A549 (cell line): ENCODE measurements at regions of chr12 and their contacts with region 1.

Region 1: GRCh38 chr12:54337280-54337842 is 12.4 kb downstream of the COPZ1 start:
- DNase-seq: no peak
- ATAC-seq: no peak
- H3K4me3 ChIP-seq: no peak overlapping the region
- H3K27ac ChIP-seq: no peak overlapping the region
- H3K4me1 ChIP-seq: 0 out of 3 replicates have a peak, but pooled peaks cover 2% of the 10 kb centered on the region
- CTCF ChIP-seq: no peak
- EP300 ChIP-seq: no peak
- POLR2A ChIP-seq: no peak
- RAD21 ChIP-seq: no peak

Region 2: GRCh38 chr12:54294152-54294952 is 43.0 kb before region 1 on chr12:
- CTCF ChIA-PET with region 1: interaction called, 23 read pairs
- POLR2A ChIA-PET with region 1: no interaction called
- DNase-seq: peak; percentile 68 to 83
- ATAC-seq: peak; percentile 31 to 51; a peak in 4 of 6 replicates
- H3K4me3 ChIP-seq: no peak overlapping the region
- H3K27ac ChIP-seq: no peak overlapping the region
- H3K4me1 ChIP-seq: no peaks in the 10 kb centered on the region
- CTCF ChIP-seq: peak; percentile 67
- EP300 ChIP-seq: no peak
- POLR2A ChIP-seq: no peak
- RAD21 ChIP-seq: peak; percentile 64 to 82

Region 3: DNA sequence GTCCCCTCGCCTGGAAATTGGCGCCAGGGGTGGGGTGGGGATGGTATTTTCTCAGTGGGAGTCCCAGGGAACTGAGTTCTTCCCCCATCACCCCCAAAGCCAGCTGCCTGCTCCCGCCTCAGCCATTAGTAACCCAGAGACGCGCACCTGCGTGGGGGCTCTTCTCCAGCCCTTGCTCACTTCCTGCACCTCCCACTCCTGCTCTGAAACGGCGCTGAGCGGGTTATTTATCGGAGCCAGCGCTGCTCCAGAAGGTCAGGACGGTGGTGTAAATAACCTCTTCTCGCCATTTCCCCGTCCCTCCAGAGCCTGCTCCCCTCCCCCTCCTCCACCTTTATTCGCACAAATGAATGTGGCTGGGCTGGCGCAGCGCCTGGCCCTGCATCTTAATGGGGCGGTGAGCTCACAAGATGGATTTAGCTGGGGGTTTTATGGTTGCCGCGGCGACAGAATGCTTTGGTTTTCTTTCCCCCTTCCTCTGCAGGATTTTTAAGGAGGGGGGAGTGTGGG is 14.7 kb after region 1 on chr12:
- CTCF ChIA-PET with region 1: interaction called, 125 read pairs
- POLR2A ChIA-PET with region 1: interaction called, 3 read pairs
- DNase-seq: no peak
- ATAC-seq: no peak
- H3K4me3 ChIP-seq: no peak overlapping the region
- H3K27ac ChIP-seq: no peak overlapping the region
- H3K4me1 ChIP-seq: peaks cover 12% of the 10 kb centered on the region; the same call in 1 of the 3 replicates
- CTCF ChIP-seq: no peak
- EP300 ChIP-seq: no peak
- POLR2A ChIP-seq: no peak
- RAD21 ChIP-seq: no peak

Region 4: DNA sequence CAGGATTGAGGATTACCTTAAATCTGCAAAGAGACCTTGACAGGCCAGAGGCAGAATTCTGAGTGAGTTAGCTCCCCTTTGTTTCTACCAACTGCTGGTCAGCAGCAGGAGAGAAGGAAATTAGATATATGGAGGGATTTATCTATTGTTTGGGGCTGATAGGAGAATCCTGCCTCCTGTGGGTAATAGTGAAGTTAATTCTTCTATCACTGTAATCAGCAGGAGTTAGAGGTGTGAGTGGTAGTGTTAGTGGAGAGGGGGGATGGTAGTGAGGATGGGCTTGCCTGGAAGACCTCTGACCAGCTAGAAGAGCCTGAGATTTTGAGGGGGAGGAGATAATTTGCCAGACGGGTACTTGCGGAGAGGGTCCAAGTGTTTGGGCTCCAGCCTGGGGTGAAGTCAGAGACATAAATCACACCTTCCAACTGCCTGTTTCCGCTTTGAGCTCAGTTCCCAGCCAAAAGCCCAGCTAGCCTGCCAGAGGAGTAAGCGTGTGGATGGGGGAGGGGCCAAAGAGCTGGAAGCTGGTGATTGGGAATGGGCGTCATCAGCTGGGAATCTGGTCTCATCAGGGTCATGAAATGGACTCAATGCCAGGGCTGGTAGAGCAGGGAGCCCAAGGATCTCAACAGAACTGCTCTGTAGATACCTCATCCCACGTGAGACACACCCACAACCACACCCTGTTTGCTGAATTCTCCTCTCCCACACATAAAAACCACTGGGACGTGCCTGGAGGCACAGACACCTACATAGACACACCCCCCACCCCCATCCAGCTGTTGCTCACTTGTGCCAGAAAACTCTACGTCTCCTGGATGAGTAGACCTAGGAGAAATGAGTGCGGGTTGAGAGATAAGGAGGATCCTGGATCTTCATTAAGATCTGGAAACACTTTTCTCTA is 94.8 kb after region 1 on chr12:
- CTCF ChIA-PET with region 1: no interaction called
- POLR2A ChIA-PET with region 1: no interaction called
- DNase-seq: peak in 1 of 2 experiments; percentile 70
- ATAC-seq: peak; percentile 26 to 48; a peak in 3 of 6 replicates
- H3K4me3 ChIP-seq: no peak overlapping the region
- H3K27ac ChIP-seq: peak overlapping the region in 1 of 2 experiments; percentile 18; a peak in 1 of 6 replicates
- H3K4me1 ChIP-seq: peaks cover 34% of the 10 kb centered on the region
- CTCF ChIP-seq: no peak
- EP300 ChIP-seq: no peak
- POLR2A ChIP-seq: no peak
- RAD21 ChIP-seq: no peak

Region 5: GRCh38 chr12:54472494-54473262 is 135.3 kb after region 1 on chr12:
- CTCF ChIA-PET with region 1: no interaction called
- POLR2A ChIA-PET with region 1: no interaction called
- DNase-seq: no peak
- ATAC-seq: no peak
- H3K4me3 ChIP-seq: no peak overlapping the region
- H3K27ac ChIP-seq: no peak overlapping the region
- H3K4me1 ChIP-seq: no peaks in the 10 kb centered on the region
- CTCF ChIP-seq: no peak
- EP300 ChIP-seq: no peak
- POLR2A ChIP-seq: no peak
- RAD21 ChIP-seq: no peak